AG04450 (cell line): ENCODE measurements at regions of chr1 and their contacts with region 1.

Region 1: GRCh38 chr1:98053471-98054366 is 132.9 kb upstream of the DPYD start:
- DNase-seq: no peak
- H3K4me3 ChIP-seq: peak overlapping the region; percentile 53
- H3K27ac ChIP-seq: peak overlapping the region; percentile 88
- H3K27me3 ChIP-seq: no peaks in the 10 kb centered on the region
- CTCF ChIP-seq: peak; percentile 69

Region 2: DNA sequence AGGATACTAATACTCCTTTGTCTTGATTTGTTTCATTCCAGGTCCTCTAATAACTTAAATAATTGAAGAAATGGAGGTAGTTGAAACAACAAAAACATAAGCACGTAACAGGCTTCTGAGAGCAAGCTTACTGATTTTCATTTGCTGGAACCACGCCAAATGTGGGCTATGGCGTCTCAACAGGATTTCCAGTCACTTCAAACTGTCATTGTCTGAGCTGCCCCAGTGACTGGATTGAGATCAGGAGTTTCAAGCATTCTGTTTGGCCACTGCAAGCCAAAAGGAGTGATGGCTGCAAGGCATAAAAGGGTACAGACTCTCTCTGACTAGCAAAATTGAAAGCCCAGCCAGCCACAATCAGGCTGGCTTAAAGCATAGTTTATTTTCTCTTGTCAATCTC is 422.8 kb before region 1 on chr1:
- CTCF ChIA-PET with region 1: no interaction called
- POLR2A ChIA-PET with region 1: no interaction called
- DNase-seq: no peak
- H3K4me3 ChIP-seq: no peak overlapping the region
- H3K27ac ChIP-seq: no peak overlapping the region
- H3K27me3 ChIP-seq: no peaks in the 10 kb centered on the region
- CTCF ChIP-seq: no peak

Region 3: GRCh38 chr1:98019747-98020146 is 34.0 kb before region 1 on chr1:
- CTCF ChIA-PET with region 1: no interaction called
- POLR2A ChIA-PET with region 1: no interaction called
- DNase-seq: no peak
- H3K4me3 ChIP-seq: no peak overlapping the region
- H3K27ac ChIP-seq: no peak overlapping the region
- H3K27me3 ChIP-seq: no peaks in the 10 kb centered on the region
- CTCF ChIP-seq: no peak

Region 4: DNA sequence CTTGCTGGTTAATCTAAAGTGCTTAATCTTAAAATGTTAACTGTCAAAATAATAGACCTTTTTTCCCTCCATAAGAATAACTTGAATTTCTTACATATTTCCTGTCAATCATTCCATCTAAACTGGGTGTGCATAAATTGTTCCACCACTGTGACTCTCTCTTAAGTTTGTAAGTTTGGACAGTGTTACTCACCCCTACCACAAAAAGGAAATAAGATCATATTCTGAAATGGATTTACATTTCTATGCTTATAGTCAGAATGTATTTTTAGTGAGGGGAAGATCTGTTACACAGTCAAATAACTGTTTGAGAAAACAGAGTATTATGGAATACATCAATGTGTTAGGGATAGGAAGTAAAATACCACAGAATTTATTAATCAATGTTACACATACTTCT is 23.2 kb before region 1 on chr1:
- CTCF ChIA-PET with region 1: no interaction called
- POLR2A ChIA-PET with region 1: no interaction called
- DNase-seq: no peak
- H3K4me3 ChIP-seq: no peak overlapping the region
- H3K27ac ChIP-seq: no peak overlapping the region
- H3K27me3 ChIP-seq: no peaks in the 10 kb centered on the region
- CTCF ChIP-seq: no peak

Region 5: DNA sequence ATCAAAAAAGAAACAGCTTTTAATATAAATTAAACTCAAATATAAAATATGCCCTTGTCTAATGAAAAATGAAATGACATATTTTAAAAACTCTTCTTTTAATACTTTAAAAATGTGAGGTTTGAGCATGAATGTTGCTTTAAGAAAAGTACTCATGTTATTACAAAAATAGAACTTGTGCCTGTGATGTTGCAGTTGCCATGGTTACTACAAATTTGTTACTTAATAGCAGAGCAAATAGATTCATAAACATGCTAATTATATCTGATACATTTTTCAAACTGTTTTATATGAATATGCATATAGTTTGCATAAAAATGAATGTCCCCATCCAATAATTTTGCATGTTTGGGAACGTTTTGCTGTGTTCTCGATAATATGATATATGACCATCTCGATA is 19.4 kb after region 1 on chr1:
- CTCF ChIA-PET with region 1: interaction called, 16 read pairs
- POLR2A ChIA-PET with region 1: no interaction called
- DNase-seq: no peak
- H3K4me3 ChIP-seq: no peak overlapping the region
- H3K27ac ChIP-seq: no peak overlapping the region
- H3K27me3 ChIP-seq: no peaks in the 10 kb centered on the region
- CTCF ChIP-seq: no peak

Region 6: DNA sequence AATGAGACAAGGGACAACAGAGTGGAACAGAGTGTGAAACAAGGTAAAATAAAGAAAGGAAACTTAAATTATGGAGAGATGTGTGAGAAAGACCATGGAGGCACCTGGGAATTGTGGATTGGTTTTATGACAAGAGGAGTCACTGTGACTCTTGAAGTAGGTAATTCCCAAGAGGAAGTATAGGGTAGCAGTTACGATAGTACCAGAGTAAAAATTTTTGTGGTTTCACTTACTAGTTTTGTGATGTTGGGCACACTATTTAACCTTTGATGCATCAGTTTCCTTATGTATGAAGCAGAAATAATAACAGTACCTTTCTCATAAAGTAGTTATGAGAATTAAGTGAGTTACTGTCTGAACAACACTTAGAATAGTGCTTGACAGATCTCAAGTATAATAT is 135.1 kb after region 1 on chr1:
- CTCF ChIA-PET with region 1: no interaction called
- POLR2A ChIA-PET with region 1: no interaction called
- DNase-seq: no peak
- H3K4me3 ChIP-seq: no peak overlapping the region
- H3K27ac ChIP-seq: no peak overlapping the region
- H3K27me3 ChIP-seq: no peaks in the 10 kb centered on the region
- CTCF ChIP-seq: no peak